Colonic mucosa (tissue), 4 donors: ENCODE measurements at regions of chr2 and their contacts with region 1.

Region 1: GRCh38 chr2:85813982-85814801 is 60.4 kb downstream of the ATOH8 start:
- DNase-seq: peak; percentile 93
- H3K4me3 ChIP-seq: no peak overlapping the region
- H3K27ac ChIP-seq: no peak overlapping the region
- H3K4me1 ChIP-seq: no peaks in the 10 kb centered on the region
- H3K27me3 ChIP-seq: no peaks in the 10 kb centered on the region
- CTCF ChIP-seq: peak; percentile 91

Region 2: DNA sequence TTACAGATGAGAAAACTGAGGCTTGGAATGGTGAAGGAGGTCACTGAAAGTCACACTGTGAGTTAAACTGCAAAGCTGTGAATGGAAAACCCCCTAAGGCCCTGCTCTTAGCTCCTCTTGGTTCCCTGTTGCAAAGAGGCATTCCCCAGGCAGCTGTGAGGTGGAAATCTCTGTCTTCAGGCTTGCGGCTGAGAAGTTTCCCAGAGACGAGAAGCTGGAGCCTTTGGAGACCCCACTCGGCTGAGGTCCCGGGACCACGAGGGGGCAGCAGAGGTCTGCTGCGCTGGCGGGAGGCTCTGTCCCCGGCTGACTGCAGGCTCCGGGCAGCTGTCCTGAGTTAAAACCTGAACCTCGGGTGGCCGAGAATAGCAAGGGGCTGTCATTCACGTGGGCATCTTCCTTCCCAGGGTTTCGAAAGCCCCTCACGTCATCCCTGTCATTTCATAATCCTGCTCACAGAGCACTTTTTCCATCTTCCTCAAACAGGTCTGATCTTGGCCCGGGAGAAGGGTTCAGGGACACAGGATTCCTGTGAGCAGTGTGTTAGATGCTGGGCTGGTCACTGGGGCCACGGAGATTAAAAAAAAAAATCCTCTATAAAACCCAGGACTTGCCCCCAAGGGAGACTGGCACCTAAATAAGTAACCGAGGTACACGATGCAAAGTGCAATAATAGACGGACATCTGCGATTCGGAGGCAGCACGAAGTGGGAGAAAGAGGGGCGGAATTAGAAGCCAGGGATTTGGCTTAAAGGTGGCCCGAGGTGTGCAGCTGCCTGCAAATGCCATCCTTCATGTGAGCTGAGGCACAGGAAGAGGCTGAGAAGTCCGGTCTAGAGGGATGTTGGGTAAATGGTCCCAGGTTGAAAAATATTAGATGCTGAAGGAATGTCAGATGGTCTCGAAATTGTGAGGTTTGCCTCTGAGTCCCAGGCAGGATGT is 85.0 kb before region 1 on chr2:
- intact Hi-C with region 1: loop called (anchors 2 kb)
- DNase-seq: peak; percentile 86
- H3K4me3 ChIP-seq: no peak overlapping the region
- H3K27ac ChIP-seq: no peak overlapping the region
- H3K4me1 ChIP-seq: no peaks in the 10 kb centered on the region
- H3K27me3 ChIP-seq: no peaks in the 10 kb centered on the region
- CTCF ChIP-seq: peak; percentile 93

Region 3: DNA sequence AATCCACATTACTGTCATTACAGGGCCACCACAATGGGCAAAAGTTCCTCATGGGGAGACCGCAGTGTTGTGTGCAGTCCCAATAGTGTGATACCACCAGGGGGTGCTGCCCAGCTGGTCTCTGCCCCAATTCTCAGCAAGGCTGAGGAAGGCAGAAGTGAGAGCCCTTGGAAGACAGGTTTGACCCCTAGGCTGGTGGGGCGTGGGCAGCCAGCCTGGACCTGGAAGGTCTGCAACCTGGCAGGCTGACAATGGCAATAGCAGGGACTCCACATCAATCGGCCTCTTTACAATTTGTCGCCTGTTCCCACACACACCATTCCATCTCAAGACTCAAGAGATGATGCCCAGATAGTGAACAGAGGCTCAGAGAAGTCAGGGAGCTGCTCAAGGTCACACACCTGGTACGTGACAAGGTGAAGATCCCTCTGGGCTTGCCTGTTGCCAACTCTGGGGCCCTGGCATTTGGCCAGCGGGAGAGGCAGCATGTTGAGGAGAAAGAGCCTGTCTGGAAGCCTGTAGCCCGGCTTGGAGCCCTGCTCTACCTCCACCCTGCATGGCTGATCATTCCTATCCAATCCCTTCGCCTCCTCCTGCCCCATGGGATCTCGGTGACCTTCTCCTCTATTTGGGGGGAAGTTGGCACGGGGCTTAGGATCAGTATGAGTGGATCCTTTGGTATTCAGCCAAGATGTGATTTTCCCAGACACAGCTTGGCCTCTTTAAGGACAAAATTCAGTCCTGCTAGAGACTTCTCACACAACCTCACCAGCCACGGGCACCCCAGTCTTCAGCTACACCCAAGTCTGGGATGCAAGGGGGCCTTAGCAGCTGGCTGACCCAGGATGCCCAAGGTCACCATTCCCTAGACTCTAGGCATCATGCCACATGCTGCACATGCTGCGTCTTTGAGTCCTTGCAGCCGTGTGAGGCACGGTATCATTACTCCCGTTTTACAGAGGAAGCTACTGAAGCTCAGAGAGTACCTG is 63.3 kb before region 1 on chr2:
- intact Hi-C with region 1: loop called (anchors 1 kb)
- DNase-seq: peak; percentile 79
- H3K4me3 ChIP-seq: no peak overlapping the region
- H3K27ac ChIP-seq: no peak overlapping the region
- H3K4me1 ChIP-seq: peaks cover 13% of the 10 kb centered on the region
- H3K27me3 ChIP-seq: peaks cover 49% of the 10 kb centered on the region
- CTCF ChIP-seq: peak; percentile 65

Region 4: DNA sequence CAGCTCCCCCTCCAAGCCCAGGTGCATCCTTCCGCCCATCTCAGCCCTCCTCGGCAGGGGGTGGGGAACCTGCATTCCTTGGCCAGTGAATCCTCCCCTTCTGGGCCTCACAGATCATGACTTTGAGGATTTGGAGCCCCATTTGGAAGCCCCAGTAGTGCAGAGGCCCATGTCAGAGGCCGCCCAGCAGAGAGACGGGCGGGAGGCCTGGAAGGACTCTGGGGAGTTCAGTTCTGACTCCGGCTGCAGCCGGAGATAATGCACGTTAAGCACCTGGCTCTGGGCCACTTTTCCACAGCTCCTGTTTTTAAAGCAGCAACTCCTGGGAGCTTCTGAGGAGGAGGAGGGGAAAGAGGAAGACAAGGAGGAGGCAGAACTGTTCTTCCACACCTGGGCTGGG is 45.5 kb before region 1 on chr2:
- intact Hi-C with region 1: no loop called
- DNase-seq: peak; percentile 57
- H3K4me3 ChIP-seq: no peak overlapping the region
- H3K27ac ChIP-seq: no peak overlapping the region
- H3K4me1 ChIP-seq: peaks cover 10% of the 10 kb centered on the region
- H3K27me3 ChIP-seq: no peaks in the 10 kb centered on the region
- CTCF ChIP-seq: no peak